Posterior vena cava (tissue), 2 donors: ENCODE measurements at regions of chr17 and their contacts with region 1.

Region 1: GRCh38 chr17:43832976-43833829 is at the start of gene MPP3:
- DNase-seq: peak; percentile 87
- total RNA-seq, gene MPP3: 8.5 to 10.2 TPM

Region 2: DNA sequence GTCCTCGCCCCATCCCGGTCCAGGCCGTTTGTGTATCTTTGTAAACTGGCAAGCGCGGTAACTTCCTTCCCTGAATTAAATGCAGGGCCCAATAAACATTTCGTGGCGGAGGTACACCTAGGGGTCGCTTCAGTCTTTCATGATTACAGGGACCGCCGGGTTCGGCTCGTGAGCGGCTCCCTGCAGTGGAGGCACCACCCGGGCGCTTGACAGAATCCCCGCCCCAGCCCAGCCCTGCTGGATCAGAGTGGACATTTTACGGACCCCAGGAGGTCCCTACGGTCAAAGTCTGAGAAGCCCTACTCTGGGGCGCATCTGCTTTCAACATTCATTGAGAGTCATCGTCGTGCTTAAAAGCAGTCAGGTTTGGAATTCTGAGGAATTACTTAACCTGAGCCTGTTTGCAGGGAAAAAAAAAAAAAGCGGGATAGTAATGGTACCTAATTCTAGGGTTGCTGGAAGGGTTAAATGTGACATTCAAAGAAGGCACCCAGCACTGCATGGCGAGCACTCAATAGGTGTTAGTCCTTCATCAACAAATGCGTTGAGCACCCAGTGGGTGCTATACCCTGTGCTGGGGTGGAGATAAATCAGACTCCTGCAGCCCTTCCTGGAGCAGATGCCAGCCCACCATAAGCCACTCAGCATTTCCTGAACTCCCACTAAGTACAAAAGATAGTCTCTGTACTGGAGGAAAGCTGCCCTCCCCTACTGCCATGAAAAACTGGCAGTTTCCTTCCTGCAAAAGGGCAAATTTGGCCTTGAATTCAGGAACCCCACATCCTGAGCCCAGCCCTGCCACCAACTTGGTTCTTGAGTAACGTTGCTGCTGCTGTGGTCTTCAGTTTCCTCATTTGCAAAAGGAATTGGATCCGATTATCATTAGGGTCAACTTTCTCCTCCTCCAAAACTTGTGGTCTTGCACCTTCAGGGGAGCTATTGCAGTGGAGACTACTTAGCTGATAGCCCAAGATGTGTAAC is 53.8 kb before region 1 on chr17:
- intact Hi-C with region 1: loop called in 1 of 2 experiments (anchors 10 kb)
- DNase-seq: peak; percentile 57